ENCODE measurements at regions of chr21 and their contacts with region 1.

Region 1: GRCh38 chr21:45596704-45597318 is 46.7 kb upstream of the PCBP3 start:
- DNase-seq: peak; percentile 79 to 93 (median 84)
- ATAC-seq: peak; percentile 65
- H3K4me3 ChIP-seq: no peak overlapping the region
- H3K4me3 Mint-ChIP-seq: no peak overlapping the region
- H3K27ac ChIP-seq: no peak overlapping the region
- H3K27ac Mint-ChIP-seq: peak overlapping the region; percentile 67
- H3K4me1 ChIP-seq: peaks cover 26% of the 10 kb centered on the region
- H3K4me1 Mint-ChIP-seq: peaks cover 19% of the 10 kb centered on the region
- H3K27me3 ChIP-seq: no peaks in the 10 kb centered on the region
- H3K27me3 Mint-ChIP-seq: no peaks in the 10 kb centered on the region
- CTCF ChIP-seq: peak; percentile 87

Region 2: DNA sequence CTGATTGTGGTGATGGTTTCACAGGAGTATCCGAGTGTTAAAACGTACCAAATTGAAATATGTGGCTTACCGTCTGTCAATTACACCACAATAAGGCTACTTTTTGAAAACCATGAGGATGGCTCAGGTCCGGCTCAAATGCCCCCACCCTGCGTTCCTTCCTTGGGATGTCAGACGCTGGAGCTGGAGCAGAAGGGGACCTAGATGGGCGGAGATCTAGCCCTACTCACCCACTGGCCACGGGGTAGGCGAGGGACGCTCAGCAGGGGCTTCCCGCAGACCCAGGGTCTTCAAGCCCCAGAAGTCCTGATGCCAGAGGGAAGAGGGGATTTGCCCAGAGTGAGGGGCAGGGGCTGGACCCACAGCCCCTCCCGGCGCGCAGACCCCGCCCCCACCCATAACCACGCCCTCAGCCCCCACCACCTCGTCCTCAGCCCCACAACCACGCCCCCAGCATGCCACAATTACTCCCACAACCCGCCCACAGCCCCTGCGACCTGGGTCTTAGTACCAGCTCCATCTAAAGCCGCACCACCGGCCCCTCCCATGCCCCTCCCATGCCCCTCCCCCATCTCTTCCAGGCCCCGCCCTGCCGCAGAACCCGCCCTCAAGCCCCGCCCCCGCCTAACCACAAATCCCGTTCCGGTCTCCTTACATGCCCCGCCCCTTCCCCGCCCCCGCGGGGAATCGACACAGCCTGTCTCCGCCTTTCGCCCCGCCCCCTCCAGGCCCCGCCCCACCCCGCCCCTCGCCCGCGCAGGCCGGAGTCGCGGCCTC is 1141.9 kb before region 1 on chr21 and contains the start of gene LRRC3:
- CTCF ChIA-PET with region 1: no interaction called
- POLR2A ChIA-PET with region 1: no interaction called
- intact Hi-C with region 1: loop called in 1 of 2 experiments (anchors 10 kb)
- DNase-seq: peak; percentile 66 to 93 (median 80)
- ATAC-seq: peak; percentile 82
- H3K4me3 ChIP-seq: peak within 1 kb of the TSS; percentile 56
- H3K4me3 Mint-ChIP-seq: peak within 1 kb of the TSS; percentile 84
- H3K27ac ChIP-seq: no peak within 1 kb of the TSS
- H3K27ac Mint-ChIP-seq: no peak within 1 kb of the TSS
- H3K4me1 ChIP-seq: peaks cover 15% of the 10 kb centered on the region
- H3K4me1 Mint-ChIP-seq: peaks cover 11% of the 10 kb centered on the region
- H3K27me3 ChIP-seq: no peaks in the 10 kb centered on the region
- H3K27me3 Mint-ChIP-seq: peaks cover 9% of the 10 kb centered on the region
- CTCF ChIP-seq: no peak
- total RNA-seq, gene LRRC3: 0.55 to 0.61 TPM

Region 3: GRCh38 chr21:45410151-45410864 is 186.5 kb before region 1 on chr21:
- CTCF ChIA-PET with region 1: no interaction called
- POLR2A ChIA-PET with region 1: no interaction called
- intact Hi-C with region 1: no loop called
- DNase-seq: no peak
- ATAC-seq: no peak
- H3K4me3 ChIP-seq: no peak overlapping the region
- H3K4me3 Mint-ChIP-seq: no peak overlapping the region
- H3K27ac ChIP-seq: no peak overlapping the region
- H3K27ac Mint-ChIP-seq: no peak overlapping the region
- H3K4me1 ChIP-seq: peaks cover 9% of the 10 kb centered on the region
- H3K4me1 Mint-ChIP-seq: peaks cover 6% of the 10 kb centered on the region
- H3K27me3 ChIP-seq: peaks cover 27 to 37% of the 10 kb centered on the region in 2 experiments
- H3K27me3 Mint-ChIP-seq: peaks cover 42% of the 10 kb centered on the region
- CTCF ChIP-seq: no peak

Region 4: GRCh38 chr21:45478115-45478801 is 118.6 kb before region 1 on chr21:
- CTCF ChIA-PET with region 1: interaction called, 4 read pairs
- POLR2A ChIA-PET with region 1: interaction called, 4 read pairs
- intact Hi-C with region 1: loop called (anchors 1 to 5 kb)
- DNase-seq: peak; percentile 65 to 91 (median 78)
- ATAC-seq: peak; percentile 78
- H3K4me3 ChIP-seq: peak overlapping the region; percentile 54
- H3K4me3 Mint-ChIP-seq: peak overlapping the region; percentile 83
- H3K27ac ChIP-seq: peak overlapping the region; percentile 89 to 95
- H3K27ac Mint-ChIP-seq: peak overlapping the region; percentile 95
- H3K4me1 ChIP-seq: peaks cover 79% of the 10 kb centered on the region
- H3K4me1 Mint-ChIP-seq: peaks cover 43% of the 10 kb centered on the region
- H3K27me3 ChIP-seq: no peaks in the 10 kb centered on the region
- H3K27me3 Mint-ChIP-seq: no peaks in the 10 kb centered on the region
- CTCF ChIP-seq: peak; percentile 91

Region 5: DNA sequence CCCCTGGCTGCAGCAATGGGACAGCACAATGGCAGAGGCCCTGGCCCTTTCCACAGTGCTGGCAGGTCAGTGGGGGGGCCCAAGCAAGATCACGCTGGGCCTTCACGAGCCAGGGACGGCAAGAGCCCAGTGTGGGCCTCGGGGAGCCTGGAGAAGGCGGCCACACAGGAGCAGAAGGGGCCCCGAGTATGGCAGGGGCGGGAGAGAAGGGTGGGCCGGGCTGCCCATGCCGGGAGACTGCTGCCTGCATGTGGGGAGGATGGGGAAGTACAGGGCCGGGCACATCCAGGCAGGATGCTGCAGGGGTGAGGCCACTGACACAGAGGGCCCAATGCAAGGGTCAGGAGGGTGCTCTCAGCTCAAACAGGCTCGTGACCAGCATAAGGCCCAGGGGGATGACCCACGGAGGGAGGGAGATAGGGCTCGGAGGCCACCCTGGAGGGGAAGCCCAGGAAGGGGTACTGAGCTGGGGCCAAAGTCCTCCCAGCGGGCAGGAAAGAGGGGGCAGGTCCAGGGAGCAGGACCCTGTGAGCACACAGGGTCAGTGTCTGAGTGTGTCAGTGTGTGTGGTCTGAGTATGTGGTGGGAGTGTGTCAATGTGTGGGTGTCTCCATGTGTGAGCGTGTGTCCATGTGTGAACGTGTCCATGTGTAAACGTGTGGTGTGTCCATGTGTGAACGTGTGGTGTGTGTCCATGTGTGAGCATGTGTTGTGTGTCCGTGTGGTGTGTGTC is 67.7 kb before region 1 on chr21:
- CTCF ChIA-PET with region 1: no interaction called
- POLR2A ChIA-PET with region 1: no interaction called
- intact Hi-C with region 1: no loop called
- DNase-seq: no peak
- ATAC-seq: no peak
- H3K4me3 ChIP-seq: no peak overlapping the region
- H3K4me3 Mint-ChIP-seq: no peak overlapping the region
- H3K27ac ChIP-seq: no peak overlapping the region
- H3K27ac Mint-ChIP-seq: no peak overlapping the region
- H3K4me1 ChIP-seq: peaks cover 24% of the 10 kb centered on the region
- H3K4me1 Mint-ChIP-seq: peaks cover 7% of the 10 kb centered on the region
- H3K27me3 ChIP-seq: no peaks in the 10 kb centered on the region
- H3K27me3 Mint-ChIP-seq: no peaks in the 10 kb centered on the region
- CTCF ChIP-seq: no peak

Region 6: DNA sequence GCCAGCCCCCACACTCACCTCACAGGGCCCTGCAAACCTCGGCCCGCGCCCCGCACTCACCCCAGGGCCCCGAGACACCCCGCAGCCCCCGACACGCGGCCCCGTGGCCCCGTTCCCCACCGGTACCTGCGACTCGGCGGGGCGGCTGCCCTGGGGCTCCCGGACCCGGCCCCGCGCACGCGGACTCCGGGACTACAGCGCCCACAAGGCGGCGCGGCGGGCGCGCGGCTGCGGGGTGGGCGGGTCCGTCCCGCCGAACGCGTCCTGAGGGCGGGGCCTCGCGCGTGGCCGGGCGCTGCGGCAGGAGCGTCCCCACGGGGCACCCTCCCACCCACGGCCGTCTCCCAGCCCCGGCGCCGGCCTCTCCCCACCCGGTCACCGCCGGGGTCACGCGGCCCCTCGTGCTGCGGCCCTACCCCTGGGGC is 54.6 kb before region 1 on chr21 and contains the start of gene SLC19A1:
- CTCF ChIA-PET with region 1: no interaction called
- POLR2A ChIA-PET with region 1: no interaction called
- intact Hi-C with region 1: loop called in 1 of 2 experiments (anchors 2 kb)
- DNase-seq: peak; percentile 48 to 90 (median 68)
- ATAC-seq: peak; percentile 83
- H3K4me3 ChIP-seq: peak within 1 kb of the TSS; percentile 46
- H3K4me3 Mint-ChIP-seq: peak within 1 kb of the TSS; percentile 86
- H3K27ac ChIP-seq: peak within 1 kb of the TSS in 1 of 2 donors; percentile 55
- H3K27ac Mint-ChIP-seq: peak within 1 kb of the TSS; percentile 80
- H3K4me1 ChIP-seq: peaks cover 23% of the 10 kb centered on the region
- H3K4me1 Mint-ChIP-seq: peaks cover 24% of the 10 kb centered on the region
- H3K27me3 ChIP-seq: no peaks in the 10 kb centered on the region
- H3K27me3 Mint-ChIP-seq: no peaks in the 10 kb centered on the region
- CTCF ChIP-seq: no peak
- total RNA-seq, gene SLC19A1: 11.5 to 12.0 TPM

Region 7: GRCh38 chr21:45562965-45563364 is 33.8 kb before region 1 on chr21:
- CTCF ChIA-PET with region 1: no interaction called
- POLR2A ChIA-PET with region 1: no interaction called
- intact Hi-C with region 1: no loop called
- DNase-seq: no peak
- ATAC-seq: no peak
- H3K4me3 ChIP-seq: no peak overlapping the region
- H3K4me3 Mint-ChIP-seq: no peak overlapping the region
- H3K27ac ChIP-seq: no peak overlapping the region
- H3K27ac Mint-ChIP-seq: no peak overlapping the region
- H3K4me1 ChIP-seq: no peaks in the 10 kb centered on the region
- H3K4me1 Mint-ChIP-seq: no peaks in the 10 kb centered on the region
- H3K27me3 ChIP-seq: no peaks in the 10 kb centered on the region
- H3K27me3 Mint-ChIP-seq: no peaks in the 10 kb centered on the region
- CTCF ChIP-seq: no peak

Region 8: DNA sequence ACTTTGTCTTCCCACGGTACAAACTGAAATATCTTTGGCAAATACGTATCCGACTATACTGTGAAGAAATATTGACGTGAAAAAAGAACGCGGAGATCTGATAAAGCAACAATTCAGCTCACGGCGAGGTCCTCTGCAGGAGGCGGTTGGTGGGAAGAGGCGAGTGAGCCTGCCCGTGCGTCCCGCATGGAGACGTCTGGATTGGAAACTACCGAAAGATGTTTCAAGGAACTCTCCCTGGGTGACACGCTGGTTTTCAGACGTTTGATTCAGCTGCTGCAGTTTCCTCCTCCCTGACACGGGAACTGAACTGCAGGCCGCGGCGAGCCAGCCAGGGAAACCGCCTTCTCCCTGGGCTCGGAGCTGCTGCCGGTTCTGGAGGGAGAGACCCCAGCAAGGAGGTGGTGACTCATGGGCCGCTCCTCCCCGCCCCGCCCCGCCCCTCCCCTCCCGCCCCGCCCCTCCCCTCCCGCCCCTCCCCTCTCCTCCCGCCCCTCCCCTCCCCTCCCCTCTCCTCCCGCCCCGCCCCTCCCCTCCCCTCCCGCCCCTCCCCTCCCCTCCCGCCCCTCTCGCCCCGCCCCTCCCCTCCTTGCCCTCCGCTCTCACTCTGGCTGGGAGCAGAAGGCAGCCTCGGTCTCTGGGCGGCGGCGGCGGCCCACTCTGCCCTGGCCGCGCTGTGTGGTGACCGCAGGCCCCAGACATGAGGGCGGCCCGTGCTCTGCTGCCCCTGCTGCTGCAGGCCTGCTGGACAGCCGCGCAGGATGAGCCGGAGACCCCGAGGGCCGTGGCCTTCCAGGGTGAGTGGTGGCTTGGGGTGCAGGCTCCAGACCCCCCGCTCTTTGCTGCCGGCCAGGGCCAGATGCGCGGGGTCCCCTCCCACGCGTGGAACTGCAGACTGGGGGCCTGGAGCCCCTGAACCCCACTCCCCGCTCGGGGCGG is 384.6 kb after region 1 on chr21 and contains the start of gene COL6A1:
- CTCF ChIA-PET with region 1: no interaction called
- POLR2A ChIA-PET with region 1: no interaction called
- intact Hi-C with region 1: loop called in 1 of 2 experiments (anchors 10 kb)
- DNase-seq: peak; percentile 36 to 85 (median 54)
- ATAC-seq: peak; percentile 79
- H3K4me3 ChIP-seq: peak within 1 kb of the TSS; percentile 59
- H3K4me3 Mint-ChIP-seq: peak within 1 kb of the TSS; percentile 76
- H3K27ac ChIP-seq: no peak within 1 kb of the TSS
- H3K27ac Mint-ChIP-seq: no peak within 1 kb of the TSS
- H3K4me1 ChIP-seq: peaks cover 32% of the 10 kb centered on the region
- H3K4me1 Mint-ChIP-seq: peaks cover 5% of the 10 kb centered on the region
- H3K27me3 ChIP-seq: peaks cover 5 to 6% of the 10 kb centered on the region in 2 experiments
- H3K27me3 Mint-ChIP-seq: peaks cover 6% of the 10 kb centered on the region
- CTCF ChIP-seq: no peak
- total RNA-seq, gene COL6A1: 8.0 to 8.5 TPM